ENCODE measurements at regions of chr5 and their contacts with region 1.

Region 1: GRCh38 chr5:115579747-115580173 is 22.5 kb downstream of the TICAM2 start:
- DNase-seq: no peak
- H3K4me3 ChIP-seq: no peak overlapping the region
- H3K27ac ChIP-seq: no peak overlapping the region
- H3K4me1 ChIP-seq: peaks cover 21% of the 10 kb centered on the region
- H3K27me3 ChIP-seq: no peaks in the 10 kb centered on the region
- CTCF ChIP-seq: no peak
- POLR2A ChIP-seq: no peak

Region 2: DNA sequence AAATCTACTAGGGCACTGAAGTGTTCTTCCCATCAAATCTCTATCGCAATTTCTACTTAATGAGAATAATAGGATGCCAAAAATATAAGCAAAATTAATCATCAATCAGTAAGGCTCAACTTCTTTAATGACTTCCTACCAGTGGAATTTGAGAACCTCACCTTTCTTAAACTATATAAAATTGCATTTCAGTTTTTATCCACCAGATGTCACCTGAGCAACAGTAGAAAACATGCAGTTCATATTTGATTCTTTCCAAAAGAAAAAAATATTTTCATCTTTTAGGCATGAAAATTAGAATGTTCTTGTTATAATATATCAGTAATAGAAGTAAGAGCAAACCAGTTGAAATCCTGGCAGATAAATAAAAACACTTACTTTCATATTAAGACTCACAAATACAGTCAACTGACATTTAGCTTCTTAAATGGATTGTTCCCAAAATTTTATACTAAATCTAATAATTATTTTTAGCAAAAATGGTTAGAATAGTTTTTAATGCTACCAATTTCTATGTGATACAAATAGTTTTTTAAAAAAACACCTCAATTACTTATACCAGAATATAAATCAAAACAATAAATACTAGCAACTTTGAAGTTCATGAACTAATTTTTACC is 269.9 kb before region 1 on chr5:
- CTCF ChIA-PET with region 1: interaction called, 98 read pairs
- POLR2A ChIA-PET with region 1: no interaction called
- dilution Hi-C with region 1: no loop called
- intact Hi-C with region 1: loop called (anchors 1 kb)
- DNase-seq: peak; percentile 69
- H3K4me3 ChIP-seq: no peak overlapping the region
- H3K27ac ChIP-seq: no peak overlapping the region
- H3K4me1 ChIP-seq: no peaks in the 10 kb centered on the region
- H3K27me3 ChIP-seq: no peaks in the 10 kb centered on the region
- CTCF ChIP-seq: peak in 1 of 2 donors; percentile 16
- POLR2A ChIP-seq: no peak

Region 3: GRCh38 chr5:115377468-115378217 is 202.1 kb before region 1 on chr5:
- CTCF ChIA-PET with region 1: interaction called, 10 read pairs
- POLR2A ChIA-PET with region 1: no interaction called
- dilution Hi-C with region 1: no loop called
- intact Hi-C with region 1: no loop called
- DNase-seq: peak; percentile 51
- H3K4me3 ChIP-seq: no peak overlapping the region
- H3K27ac ChIP-seq: no peak overlapping the region
- H3K4me1 ChIP-seq: peaks cover 7% of the 10 kb centered on the region
- H3K27me3 ChIP-seq: no peaks in the 10 kb centered on the region
- CTCF ChIP-seq: no peak
- POLR2A ChIP-seq: no peak

Region 4: DNA sequence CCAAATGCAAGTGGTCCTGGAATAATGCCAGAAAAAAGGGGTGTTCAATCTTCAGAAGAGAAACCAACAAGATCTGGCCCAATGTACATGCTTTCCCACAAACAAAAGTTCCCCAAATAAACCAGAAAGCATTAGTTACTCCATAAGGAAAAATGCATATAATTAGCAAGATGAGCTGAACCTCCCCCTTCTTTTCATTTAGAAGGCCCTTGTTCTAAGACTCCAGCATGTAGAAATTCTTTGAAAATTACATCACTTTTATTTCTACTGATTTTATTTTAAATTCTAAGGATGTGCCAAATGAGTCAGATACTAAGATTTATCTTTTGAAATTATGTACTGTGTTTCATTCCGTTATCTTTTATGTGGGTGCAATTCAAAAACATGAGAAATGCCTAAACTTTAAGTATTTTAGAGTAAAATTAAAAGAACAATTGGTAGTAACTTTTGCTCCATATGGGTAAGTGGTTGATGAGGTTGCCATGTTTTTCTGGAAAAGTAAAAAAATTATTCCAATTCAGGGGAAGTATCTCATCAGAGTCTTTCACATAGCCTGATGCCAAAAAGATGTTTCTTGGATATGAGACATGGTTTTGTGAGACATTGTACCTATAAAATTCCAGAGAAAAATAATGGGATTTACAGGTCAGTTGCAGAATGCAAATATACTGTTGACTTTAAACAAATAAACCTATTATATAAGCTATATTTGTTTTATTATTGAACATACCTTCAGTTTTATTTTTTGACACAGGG is 176.8 kb before region 1 on chr5:
- CTCF ChIA-PET with region 1: no interaction called
- POLR2A ChIA-PET with region 1: no interaction called
- dilution Hi-C with region 1: no loop called
- intact Hi-C with region 1: no loop called
- DNase-seq: no peak
- H3K4me3 ChIP-seq: no peak overlapping the region
- H3K27ac ChIP-seq: no peak overlapping the region
- H3K4me1 ChIP-seq: no peaks in the 10 kb centered on the region
- H3K27me3 ChIP-seq: no peaks in the 10 kb centered on the region
- CTCF ChIP-seq: no peak
- POLR2A ChIP-seq: no peak

Region 5: DNA sequence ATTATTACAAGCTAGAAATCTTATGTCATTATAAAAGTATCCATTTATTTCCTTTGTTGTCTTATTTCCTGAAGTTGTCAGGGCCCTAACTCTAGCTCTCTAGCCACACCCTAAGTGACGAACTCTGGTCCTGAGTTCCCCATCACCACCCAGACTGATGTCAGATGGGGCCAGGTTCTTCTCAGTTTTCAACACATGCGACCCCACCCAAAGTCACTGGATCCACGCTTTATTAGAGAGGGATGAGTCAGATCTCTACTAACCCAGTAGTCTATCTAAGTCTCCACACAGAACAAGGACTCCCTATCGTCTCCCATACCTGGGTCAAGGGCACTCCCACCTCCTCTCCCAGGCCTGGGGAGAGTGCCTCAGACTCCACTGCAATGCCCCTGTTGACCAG is 28.3 kb before region 1 on chr5:
- CTCF ChIA-PET with region 1: interaction called, 11 read pairs
- POLR2A ChIA-PET with region 1: no interaction called
- dilution Hi-C with region 1: no loop called
- intact Hi-C with region 1: loop called (anchors 1 kb)
- DNase-seq: no peak
- H3K4me3 ChIP-seq: no peak overlapping the region
- H3K27ac ChIP-seq: no peak overlapping the region
- H3K4me1 ChIP-seq: peaks cover 10% of the 10 kb centered on the region
- H3K27me3 ChIP-seq: no peaks in the 10 kb centered on the region
- CTCF ChIP-seq: no peak
- POLR2A ChIP-seq: no peak

Region 6: GRCh38 chr5:115557667-115558387 is 21.9 kb before region 1 on chr5:
- CTCF ChIA-PET with region 1: interaction called, 13 read pairs
- POLR2A ChIA-PET with region 1: no interaction called
- dilution Hi-C with region 1: no loop called
- intact Hi-C with region 1: loop called (anchors 2 kb)
- DNase-seq: peak; percentile 74
- H3K4me3 ChIP-seq: no peak overlapping the region
- H3K27ac ChIP-seq: peak overlapping the region; percentile 94
- H3K4me1 ChIP-seq: peaks cover 29% of the 10 kb centered on the region
- H3K27me3 ChIP-seq: no peaks in the 10 kb centered on the region
- CTCF ChIP-seq: no peak
- POLR2A ChIP-seq: no peak